Dorsolateral prefrontal cortex (tissue), 120 donors: ENCODE measurements at regions of chrX and their contacts with region 1.

Region 1: GRCh38 chrX:47650164-47651042 is at the start of gene ELK1:
- DNase-seq: peak; percentile 89 to 98 (median 97)
- H3K4me3 ChIP-seq: peak within 1 kb of the TSS; percentile 33 to 79 (median 65)
- H3K27ac ChIP-seq: peak within 1 kb of the TSS in 54 of 59 donors; percentile 31 to 89 (median 76)
- H3K27me3 ChIP-seq: peaks cover 0 to 55% (median 4%) of the 10 kb centered on the region in 45 donors
- CTCF ChIP-seq: peak in 9 of 56 donors; percentile 4 to 34 (median 17)
- total RNA-seq, gene ELK1: 25.1 to 179 (median 92.3) TPM

Region 2: DNA sequence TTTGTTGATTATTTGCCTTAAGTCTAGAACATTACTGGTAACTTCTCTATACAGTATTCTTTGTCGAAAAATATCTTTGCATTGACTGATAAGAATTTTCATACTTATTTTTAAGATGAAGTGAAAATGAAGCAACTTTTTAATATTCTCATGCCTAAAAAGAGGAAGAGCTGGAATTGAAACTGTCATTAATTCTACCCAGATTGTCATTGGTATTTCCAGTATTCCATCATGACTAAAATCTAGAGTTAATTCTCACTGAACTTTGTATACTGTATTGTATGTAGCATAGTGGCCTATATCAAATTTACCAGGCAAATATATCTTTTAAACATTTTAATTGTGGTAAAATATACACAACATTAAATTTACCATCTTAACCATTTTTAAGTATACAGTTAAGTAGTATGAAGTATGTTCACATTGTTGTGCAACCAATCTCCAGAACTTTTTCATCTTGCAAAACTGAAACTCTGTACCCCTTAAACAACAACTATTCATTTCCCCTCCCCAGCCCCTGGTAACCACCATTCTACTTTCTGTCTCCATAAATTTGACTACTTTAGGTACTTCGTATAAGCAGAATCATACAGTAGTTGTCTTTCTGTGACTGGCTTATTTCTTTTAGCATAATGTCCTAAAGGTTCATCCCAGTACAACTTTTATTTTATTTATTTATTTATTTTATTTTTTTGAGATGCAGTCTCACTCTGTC is 143.1 kb before region 1 on chrX:
- intact Hi-C with region 1: no loop called
- DNase-seq: no peak
- H3K4me3 ChIP-seq: no peak overlapping the region
- H3K27ac ChIP-seq: no peak overlapping the region
- H3K27me3 ChIP-seq: peaks cover 0 to 46% (median 12%) of the 10 kb centered on the region in 45 donors
- CTCF ChIP-seq: no peak

Region 3: GRCh38 chrX:47836164-47837072 is 186.0 kb after region 1 on chrX and contains the start of gene ZNF81:
- intact Hi-C with region 1: loop called in 1 of 2 experiments (anchors 10 kb)
- DNase-seq: peak; percentile 86 to 94 (median 92)
- H3K4me3 ChIP-seq: peak within 1 kb of the TSS; percentile 26 to 76 (median 60)
- H3K27ac ChIP-seq: peak within 1 kb of the TSS in 55 of 59 donors; percentile 5 to 85 (median 70)
- H3K27me3 ChIP-seq: peaks cover 0 to 44% (median 0%) of the 10 kb centered on the region in 45 donors
- CTCF ChIP-seq: peak in 8 of 56 donors; percentile 3 to 31 (median 15)
- total RNA-seq, gene ZNF81: 13.5 to 35.3 (median 21.3) TPM